ENCODE measurements at regions of chr12 and their contacts with region 1.

Region 1: DNA sequence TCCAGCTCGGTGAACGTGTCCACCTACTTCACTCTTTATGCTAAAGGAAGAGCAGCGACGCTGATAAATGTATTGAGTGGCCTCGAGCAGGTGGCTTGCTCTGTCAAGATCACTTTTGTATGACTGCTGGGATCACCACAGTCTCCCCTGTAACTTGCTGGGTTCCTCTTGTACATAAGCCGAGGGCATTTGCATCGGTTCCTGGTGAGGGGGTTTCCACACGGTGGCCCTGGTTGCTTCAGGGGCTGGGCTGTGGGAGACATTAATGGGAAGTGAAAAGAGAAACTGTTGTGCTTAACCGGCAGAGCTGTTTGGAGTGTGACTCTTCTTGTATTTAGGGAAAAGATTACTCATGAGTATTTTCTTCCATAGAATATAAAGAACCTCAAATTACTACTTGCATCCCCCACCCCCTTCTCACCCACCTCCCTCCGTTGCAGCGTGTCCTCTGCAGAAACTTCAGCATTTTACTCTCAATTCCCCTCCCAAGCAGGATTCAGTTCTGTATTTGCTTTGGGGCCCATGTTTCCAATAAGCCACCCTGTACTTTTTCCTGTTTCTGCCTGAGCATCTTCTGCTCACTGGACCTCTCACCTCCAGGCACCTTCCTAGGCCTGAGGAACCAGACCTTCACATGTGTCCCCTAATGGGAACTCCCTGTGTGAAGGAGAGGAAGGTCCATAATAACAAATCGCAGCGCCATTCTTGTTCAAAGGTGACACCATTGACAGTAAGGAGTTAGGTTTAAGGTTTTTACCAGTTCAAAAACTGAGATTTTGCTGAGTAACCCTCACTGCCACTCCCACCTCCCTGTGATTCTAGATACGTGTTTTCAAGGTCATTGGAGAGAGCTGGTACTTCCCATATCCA is 187.0 kb downstream of the ETV6 start:
- DNase-seq: peak in 1 of 9 donors; percentile 76
- ATAC-seq: peak; percentile 79
- H3K4me3 ChIP-seq: no peak overlapping the region
- H3K4me3 Mint-ChIP-seq: peak overlapping the region in 1 of 10 donors; percentile 79
- H3K27ac ChIP-seq: no peak overlapping the region
- H3K27ac Mint-ChIP-seq: peak overlapping the region in 3 of 9 donors; percentile 12 to 81 (median 61)
- H3K4me1 ChIP-seq: no peaks in the 10 kb centered on the region
- H3K4me1 Mint-ChIP-seq: peaks cover 8 to 54% (median 27%) of the 10 kb centered on the region in 7 donors
- H3K27me3 ChIP-seq: no peaks in the 10 kb centered on the region
- H3K27me3 Mint-ChIP-seq: no peaks in the 10 kb centered on the region

Region 2: GRCh38 chr12:11847539-11847938 is 11.0 kb after region 1 on chr12:
- CTCF ChIA-PET with region 1: no interaction called
- POLR2A ChIA-PET with region 1: no interaction called
- intact Hi-C with region 1: no loop called
- DNase-seq: no peak
- ATAC-seq: no peak
- H3K4me3 ChIP-seq: no peak overlapping the region
- H3K4me3 Mint-ChIP-seq: no peak overlapping the region
- H3K27ac ChIP-seq: no peak overlapping the region
- H3K27ac Mint-ChIP-seq: peak overlapping the region in 3 of 9 donors; percentile 1 to 48 (median 47)
- H3K4me1 ChIP-seq: no peaks in the 10 kb centered on the region
- H3K4me1 Mint-ChIP-seq: peaks cover 0 to 17% (median 4%) of the 10 kb centered on the region in 7 donors
- H3K27me3 ChIP-seq: no peaks in the 10 kb centered on the region
- H3K27me3 Mint-ChIP-seq: no peaks in the 10 kb centered on the region

Region 3: DNA sequence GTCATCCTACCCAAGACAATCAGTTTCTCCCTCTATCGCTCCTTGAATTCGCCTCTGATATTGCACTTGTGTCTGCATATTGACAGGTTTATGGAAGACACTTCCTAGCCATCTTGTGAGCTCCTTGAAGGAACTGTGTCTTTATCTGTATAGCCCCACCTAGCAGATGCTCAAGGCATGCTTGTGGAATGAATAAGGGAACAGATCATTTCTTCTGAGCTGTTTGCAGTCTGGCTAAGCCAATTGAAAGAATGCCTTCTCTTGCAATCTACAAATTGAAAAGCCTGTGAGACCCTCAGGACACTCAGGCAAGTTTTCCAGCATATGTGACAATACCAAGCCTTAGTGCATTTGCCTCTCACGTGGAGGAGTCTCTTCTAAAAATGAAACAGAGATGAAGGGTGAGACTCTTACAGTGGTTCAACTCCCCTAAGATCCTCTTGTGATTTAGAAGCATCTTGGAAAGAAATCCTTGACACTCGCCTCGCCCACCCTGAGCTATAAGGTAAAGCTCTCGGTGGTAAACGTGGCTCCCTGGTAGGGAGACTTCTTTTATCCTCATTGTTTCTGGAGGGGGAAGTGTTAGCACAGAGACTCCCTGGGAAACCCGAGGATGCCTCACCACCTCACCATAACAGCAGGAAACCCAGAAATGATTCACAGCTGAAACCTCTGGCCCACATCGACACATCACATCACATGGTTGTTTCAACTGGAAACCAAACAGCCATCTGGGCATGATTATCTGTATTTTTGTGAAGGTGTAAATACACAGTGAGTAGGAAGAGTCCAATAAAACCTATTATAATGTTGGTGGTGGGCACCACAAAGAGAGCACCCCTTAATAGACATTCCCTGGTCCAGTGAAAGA is 121.9 kb after region 1 on chr12:
- CTCF ChIA-PET with region 1: no interaction called
- POLR2A ChIA-PET with region 1: no interaction called
- intact Hi-C with region 1: loop called in 1 of 2 experiments (anchors 5 kb)
- DNase-seq: peak in 1 of 9 donors; percentile 65
- ATAC-seq: peak; percentile 34
- H3K4me3 ChIP-seq: no peak overlapping the region
- H3K4me3 Mint-ChIP-seq: peak overlapping the region in 1 of 10 donors; percentile 70
- H3K27ac ChIP-seq: no peak overlapping the region
- H3K27ac Mint-ChIP-seq: peak overlapping the region in 3 of 9 donors; percentile 9 to 93 (median 53)
- H3K4me1 ChIP-seq: peaks cover 0 to 4% of the 10 kb centered on the region in 2 donors
- H3K4me1 Mint-ChIP-seq: peaks cover 15 to 54% (median 20%) of the 10 kb centered on the region in 7 donors
- H3K27me3 ChIP-seq: no peaks in the 10 kb centered on the region
- H3K27me3 Mint-ChIP-seq: peaks cover 0 to 5% (median 0%) of the 10 kb centered on the region in 5 donors